HepG2 (cell line): ENCODE measurements at regions of chr17 and their contacts with region 1.

Region 1: GRCh38 chr17:42577532-42578281 is at the start of gene PSMC3IP:
- DNase-seq: peak; percentile 92
- ATAC-seq: peak; percentile 90
- H3K4me3 ChIP-seq: peak within 1 kb of the TSS; percentile 75 to 97 (median 87)
- H3K27ac ChIP-seq: peak within 1 kb of the TSS; percentile 90
- H3K4me1 ChIP-seq: peaks cover 33% of the 10 kb centered on the region
- H3K27me3 ChIP-seq: no peaks in the 10 kb centered on the region; a peak in 1 of 5 replicates
- CTCF ChIP-seq: peak; percentile 84
- EP300 ChIP-seq: 0 out of 4 replicates have a peak, but pooled peaks of 1 of the 2 experiments have one; percentile 24
- POLR2A ChIP-seq: peak; percentile 90 to 94
- RAD21 ChIP-seq: peak; percentile 59; the same call in 1 of the 2 replicates
- total RNA-seq, gene PSMC3IP: 20.1 and 22.4 TPM in 2 replicates

Region 2: DNA sequence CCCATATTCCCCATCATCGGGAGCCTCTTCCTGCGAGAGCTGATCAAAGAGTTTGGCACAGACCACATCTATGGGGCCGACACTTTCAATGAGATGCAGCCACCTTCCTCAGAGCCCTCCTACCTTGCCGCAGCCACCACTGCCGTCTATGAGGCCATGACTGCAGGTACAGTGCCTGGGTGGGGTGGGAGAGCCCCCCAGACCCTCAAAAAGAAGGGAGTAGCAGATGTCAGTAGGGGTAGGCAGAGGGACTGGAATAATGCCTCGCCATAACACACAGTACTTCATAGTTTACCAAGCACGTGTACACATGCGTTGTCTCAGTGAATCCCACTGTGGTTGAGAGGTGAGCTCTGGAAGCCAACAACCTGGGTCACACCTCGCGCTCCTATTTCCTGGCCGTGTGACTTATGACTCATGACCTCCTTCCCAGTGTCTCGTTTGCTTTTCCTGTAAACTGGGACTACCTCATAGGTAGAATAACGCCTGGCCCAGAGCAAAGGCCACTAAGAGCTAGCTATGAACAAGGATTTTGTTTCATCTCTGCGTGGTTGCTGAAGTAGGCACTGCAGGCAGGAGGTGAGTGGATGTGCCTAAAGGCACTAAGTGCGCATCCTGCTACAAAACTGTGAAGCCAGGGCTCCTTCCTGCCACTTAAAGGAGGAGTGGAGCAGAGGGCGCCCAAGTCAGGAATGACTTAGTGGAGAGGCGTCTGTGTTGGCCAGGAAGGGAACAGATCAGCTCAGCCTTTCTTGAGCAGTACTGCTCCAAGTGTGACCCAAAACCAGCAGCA is 36.5 kb before region 1 on chr17:
- CTCF ChIA-PET with region 1: no interaction called
- POLR2A ChIA-PET with region 1: interaction called, 20 read pairs
- in situ Hi-C with region 1: no loop called
- intact Hi-C with region 1: no loop called
- DNase-seq: peak; percentile 94
- ATAC-seq: peak; percentile 48
- H3K4me3 ChIP-seq: no peak overlapping the region; a peak in 1 of 6 replicates
- H3K27ac ChIP-seq: peak overlapping the region; percentile 76
- H3K4me1 ChIP-seq: peaks cover 76% of the 10 kb centered on the region
- H3K27me3 ChIP-seq: no peaks in the 10 kb centered on the region
- CTCF ChIP-seq: no peak
- EP300 ChIP-seq: peak; percentile 26 to 76; a peak in 2 of 4 replicates
- POLR2A ChIP-seq: peak; percentile 63 to 64
- RAD21 ChIP-seq: peak; percentile 9; the same call in 1 of the 2 replicates

Region 3: GRCh38 chr17:42554250-42555121 is 23.2 kb before region 1 on chr17:
- CTCF ChIA-PET with region 1: no interaction called
- POLR2A ChIA-PET with region 1: interaction called, 20 read pairs
- in situ Hi-C with region 1: no loop called
- intact Hi-C with region 1: no loop called
- DNase-seq: peak; percentile 86
- ATAC-seq: peak; percentile 81
- H3K4me3 ChIP-seq: peak overlapping the region; percentile 88 to 100 (median 94)
- H3K27ac ChIP-seq: peak overlapping the region; percentile 87
- H3K4me1 ChIP-seq: peaks cover 52% of the 10 kb centered on the region
- H3K27me3 ChIP-seq: no peaks in the 10 kb centered on the region; a peak in 1 of 5 replicates
- CTCF ChIP-seq: peak; percentile 32
- EP300 ChIP-seq: peak in 1 of 2 experiments; percentile 39; a peak in 1 of 4 replicates
- POLR2A ChIP-seq: peak; percentile 81 to 92
- RAD21 ChIP-seq: peak; percentile 46; the same call in 1 of the 2 replicates

Region 4: GRCh38 chr17:42566883-42567573 is 10.7 kb before region 1 on chr17 and contains the start of gene MLX:
- CTCF ChIA-PET with region 1: interaction called, 3 read pairs
- POLR2A ChIA-PET with region 1: interaction called, 128 read pairs
- in situ Hi-C with region 1: no loop called
- intact Hi-C with region 1: loop called (anchors 1 kb)
- DNase-seq: peak; percentile 91
- ATAC-seq: peak; percentile 64
- H3K4me3 ChIP-seq: peak within 1 kb of the TSS; percentile 67 to 93 (median 91)
- H3K27ac ChIP-seq: peak within 1 kb of the TSS; percentile 91
- H3K4me1 ChIP-seq: peaks cover 72% of the 10 kb centered on the region
- H3K27me3 ChIP-seq: no peaks in the 10 kb centered on the region; a peak in 1 of 5 replicates
- CTCF ChIP-seq: peak; percentile 48
- EP300 ChIP-seq: no peak; a peak in 2 of 4 replicates
- POLR2A ChIP-seq: peak in 1 of 2 experiments; percentile 60; a peak in 2 of 4 replicates
- RAD21 ChIP-seq: peak; percentile 44
- total RNA-seq, gene MLX: 38.9 and 40.2 TPM in 2 replicates

Region 5: GRCh38 chr17:42609182-42609813 is 31.6 kb after region 1 on chr17 and contains the starts of genes RETREG3 and TUBG1:
- CTCF ChIA-PET with region 1: no interaction called
- POLR2A ChIA-PET with region 1: interaction called, 39 read pairs
- in situ Hi-C with region 1: no loop called
- intact Hi-C with region 1: no loop called
- DNase-seq: peak; percentile 99
- ATAC-seq: peak; percentile 89
- H3K4me3 ChIP-seq: peak within 1 kb of the TSS; percentile 75 to 94 (median 91)
- H3K27ac ChIP-seq: peak within 1 kb of the TSS; percentile 89
- H3K4me1 ChIP-seq: peaks cover 59% of the 10 kb centered on the region
- H3K27me3 ChIP-seq: no peaks in the 10 kb centered on the region; a peak in 1 of 5 replicates
- CTCF ChIP-seq: peak; percentile 45
- EP300 ChIP-seq: no peak
- POLR2A ChIP-seq: peak; percentile 93 to 95
- RAD21 ChIP-seq: peak; percentile 81
- total RNA-seq, gene RETREG3: 38.2 and 55.8 TPM in 2 replicates
- total RNA-seq, gene TUBG1: 137 TPM in 2 replicates

Region 6: DNA sequence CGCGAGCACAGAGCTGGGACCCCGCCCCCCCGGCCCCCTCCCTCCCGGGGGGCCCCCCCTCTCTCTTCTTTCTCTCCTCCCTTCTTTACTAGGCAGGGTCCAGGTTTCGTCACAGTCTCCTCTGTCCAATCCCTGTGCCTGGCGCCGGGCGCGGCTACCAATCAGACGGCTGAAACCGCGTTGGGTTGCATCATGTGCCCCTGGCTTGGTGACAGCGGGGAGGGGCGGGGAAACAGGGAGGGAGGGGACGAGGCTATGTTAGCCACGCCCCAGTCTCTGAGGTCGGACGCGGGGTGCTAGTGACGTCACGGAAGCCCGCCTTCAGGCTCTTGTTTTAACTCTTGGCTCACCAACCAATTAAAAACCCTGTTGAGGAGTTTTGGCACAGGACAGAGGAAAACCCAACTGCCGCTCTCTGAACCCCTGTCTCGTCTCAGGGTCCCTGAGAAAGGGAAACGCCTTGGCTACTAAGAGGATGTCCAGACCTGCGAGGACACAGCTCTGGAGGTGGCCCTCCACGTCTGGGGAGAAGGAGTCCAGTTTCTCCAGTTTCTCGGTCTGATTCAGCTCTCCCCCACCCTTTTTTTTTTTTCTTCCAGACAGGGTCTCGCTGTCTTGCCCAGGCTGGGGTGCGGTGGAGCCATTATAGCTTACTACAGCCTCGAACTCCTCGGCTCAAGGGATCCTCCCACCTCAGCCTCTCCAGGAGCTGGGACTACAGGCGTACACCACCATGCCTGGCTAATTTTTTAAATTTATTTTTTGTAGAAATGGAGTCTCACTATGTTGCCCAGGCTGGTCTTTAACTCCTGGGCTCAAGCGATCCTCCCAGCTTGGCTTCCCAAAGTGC is 99.5 kb after region 1 on chr17:
- CTCF ChIA-PET with region 1: interaction called, 9 read pairs
- POLR2A ChIA-PET with region 1: interaction called, 31 read pairs
- in situ Hi-C with region 1: no loop called
- intact Hi-C with region 1: loop called (anchors 2 kb)
- DNase-seq: peak; percentile 99
- ATAC-seq: peak; percentile 64
- H3K4me3 ChIP-seq: peak overlapping the region; percentile 76 to 99 (median 83)
- H3K27ac ChIP-seq: peak overlapping the region; percentile 92
- H3K4me1 ChIP-seq: peaks cover 51% of the 10 kb centered on the region
- H3K27me3 ChIP-seq: no peaks in the 10 kb centered on the region
- CTCF ChIP-seq: no peak
- EP300 ChIP-seq: peak in 1 of 2 experiments; percentile 54; a peak in 1 of 4 replicates
- POLR2A ChIP-seq: no peak; a peak in 1 of 4 replicates
- RAD21 ChIP-seq: no peak

Region 7: GRCh38 chr17:42706732-42707131 is 129.0 kb after region 1 on chr17:
- CTCF ChIA-PET with region 1: no interaction called
- POLR2A ChIA-PET with region 1: no interaction called
- in situ Hi-C with region 1: no loop called
- intact Hi-C with region 1: no loop called
- DNase-seq: no peak
- ATAC-seq: no peak
- H3K4me3 ChIP-seq: no peak overlapping the region
- H3K27ac ChIP-seq: no peak overlapping the region
- H3K4me1 ChIP-seq: no peaks in the 10 kb centered on the region
- H3K27me3 ChIP-seq: no peaks in the 10 kb centered on the region
- CTCF ChIP-seq: no peak
- EP300 ChIP-seq: no peak
- POLR2A ChIP-seq: no peak
- RAD21 ChIP-seq: no peak

Region 8: DNA sequence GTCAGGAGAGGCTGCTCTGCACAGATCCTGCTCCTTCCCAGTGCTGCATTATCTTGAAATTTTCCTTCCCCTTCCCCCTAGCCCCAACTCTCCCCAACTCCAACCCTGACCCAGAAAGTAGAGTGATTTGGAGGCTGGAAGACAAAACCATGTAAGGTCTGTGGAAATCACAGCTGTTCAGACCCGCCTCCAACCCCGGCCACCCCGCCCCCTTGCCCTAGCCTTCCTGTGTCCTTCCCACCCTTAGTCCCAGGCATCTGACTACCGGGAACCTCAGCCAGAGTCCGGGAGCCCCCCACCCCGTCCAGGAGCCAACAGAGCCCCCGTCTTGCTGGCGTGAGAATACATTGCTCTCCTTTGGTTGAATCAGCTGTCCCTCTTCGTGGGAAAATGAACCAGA is 273.2 kb after region 1 on chr17 and contains the start of gene AOC3:
- CTCF ChIA-PET with region 1: no interaction called
- POLR2A ChIA-PET with region 1: no interaction called
- in situ Hi-C with region 1: no loop called
- intact Hi-C with region 1: no loop called
- DNase-seq: peak; percentile 28
- ATAC-seq: peak; percentile 13; the same call in 2 of the 3 replicates
- H3K4me3 ChIP-seq: peak within 1 kb of the TSS in 2 of 3 experiments; percentile 23 to 58; a peak in 2 of 6 replicates
- H3K27ac ChIP-seq: no peak within 1 kb of the TSS
- H3K4me1 ChIP-seq: peaks cover 75% of the 10 kb centered on the region
- H3K27me3 ChIP-seq: no peaks in the 10 kb centered on the region
- CTCF ChIP-seq: no peak
- EP300 ChIP-seq: no peak
- POLR2A ChIP-seq: no peak
- RAD21 ChIP-seq: no peak
- total RNA-seq, gene AOC3: 8.7 and 10.4 TPM in 2 replicates